Psoas muscle (tissue), 8 donors: ENCODE measurements at regions of chr9 and their contacts with region 1.

Region 1: DNA sequence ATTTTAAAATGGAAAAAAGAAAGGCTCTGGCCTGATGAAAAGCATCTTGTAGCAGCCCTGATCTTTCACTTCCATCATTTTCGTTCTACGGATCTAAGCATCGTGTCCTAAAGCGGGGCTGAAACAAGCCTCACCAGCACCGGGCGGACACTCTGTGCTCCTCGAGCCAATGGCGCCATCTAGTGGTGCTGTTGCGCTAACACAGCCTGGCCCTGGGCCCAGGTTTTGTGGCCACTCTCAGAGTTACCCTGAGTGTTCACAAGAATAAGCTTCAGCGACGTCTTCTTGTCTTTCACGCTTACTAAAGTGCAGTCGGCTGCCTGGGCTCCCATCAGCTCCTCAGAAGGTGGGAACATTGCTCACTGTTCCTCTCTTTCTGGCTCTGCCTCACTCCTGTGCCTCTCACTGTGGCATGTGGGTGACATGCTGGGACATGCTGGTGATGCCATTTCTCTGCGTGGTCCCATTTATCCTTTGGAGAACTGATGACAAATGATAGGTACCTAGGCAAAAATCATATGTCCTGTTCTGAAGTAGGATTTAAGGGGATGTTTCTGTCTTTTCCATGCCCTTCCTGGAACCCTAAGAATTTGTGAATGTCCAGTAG is 32.7 kb downstream of the DMRT3 start:
- DNase-seq: peak; percentile 78 to 91
- ATAC-seq: peak; percentile 93 to 98 (median 95)
- H3K4me3 ChIP-seq: no peak overlapping the region
- H3K27ac ChIP-seq: no peak overlapping the region
- H3K4me1 ChIP-seq: no peaks in the 10 kb centered on the region
- H3K27me3 ChIP-seq: no peaks in the 10 kb centered on the region
- CTCF ChIP-seq: peak; percentile 97

Region 2: GRCh38 chr9:893843-894420 is 115.3 kb before region 1 on chr9:
- intact Hi-C with region 1: loop called (anchors 2 to 5 kb)
- DNase-seq: peak in 1 of 2 donors; percentile 13
- ATAC-seq: peak; percentile 59 to 83 (median 68)
- H3K4me3 ChIP-seq: no peak overlapping the region
- H3K27ac ChIP-seq: no peak overlapping the region
- H3K4me1 ChIP-seq: no peaks in the 10 kb centered on the region
- H3K27me3 ChIP-seq: no peaks in the 10 kb centered on the region
- CTCF ChIP-seq: peak; percentile 76